ENCODE measurements at regions of chr17 and their contacts with region 1.

Region 1: DNA sequence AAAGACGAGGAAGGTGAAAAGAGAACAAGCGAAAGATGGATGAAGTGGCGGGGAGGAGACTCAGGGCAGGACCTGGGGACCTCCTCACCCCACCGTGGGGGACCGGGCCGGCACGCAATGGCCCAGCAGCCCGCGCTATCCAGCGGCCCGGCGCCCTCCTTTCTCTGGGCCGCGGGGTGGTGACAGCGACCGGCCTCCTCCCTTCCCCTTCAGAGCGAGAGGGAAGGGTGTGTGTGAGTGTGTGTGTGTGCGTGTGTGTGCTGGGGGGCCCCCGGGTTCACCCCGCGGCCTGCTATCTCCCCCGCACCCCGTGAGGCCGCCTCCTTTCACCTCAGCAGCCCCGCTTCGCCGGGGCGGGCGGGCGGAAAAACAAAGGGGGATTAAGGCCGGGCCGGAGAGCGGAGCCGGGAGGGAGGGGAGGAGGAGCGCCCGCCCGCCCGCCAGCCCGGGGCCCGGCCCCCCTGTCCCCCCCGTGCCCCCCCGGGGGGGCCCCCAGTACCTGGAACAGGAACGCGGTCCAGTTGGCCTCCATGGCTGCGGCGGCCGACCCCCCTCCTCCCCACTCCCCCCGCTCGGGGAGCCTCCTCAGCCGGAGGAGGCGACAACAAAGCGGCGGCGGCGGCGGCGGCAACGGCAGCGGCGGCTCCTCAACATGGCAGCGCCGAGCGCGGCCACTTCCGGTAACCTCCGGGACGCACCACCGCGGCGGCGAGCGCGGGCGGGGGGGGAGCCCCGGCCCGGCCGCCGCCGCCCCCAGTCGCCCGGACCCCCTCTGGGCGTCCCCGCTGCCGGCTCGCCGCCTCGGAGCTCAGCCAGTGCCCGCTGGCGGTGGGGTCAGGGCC is at the start of gene VEZF1:
- DNase-seq: peak in 1 of 2 experiments; percentile 83
- H3K4me3 ChIP-seq: peak within 1 kb of the TSS; percentile 73 to 95 (median 86)
- H3K27ac ChIP-seq: peak within 1 kb of the TSS; percentile 89
- H3K4me1 ChIP-seq: peaks cover 0 to 2% (median 0%) of the 10 kb centered on the region in 4 experiments; a peak in 3 of 7 replicates
- H3K27me3 ChIP-seq: no peaks in the 10 kb centered on the region
- CTCF ChIP-seq: no peak
- EP300 ChIP-seq: 0 out of 3 replicates have a peak, but pooled peaks of 1 of the 2 experiments have one; percentile 22
- POLR2A ChIP-seq: no peak; a peak in 1 of 3 replicates
- RAD21 ChIP-seq: no peak
- total RNA-seq, gene VEZF1: 56.7 and 61.9 TPM in 2 replicates

Region 2: GRCh38 chr17:57875309-57876115 is 112.3 kb before region 1 on chr17:
- CTCF ChIA-PET with region 1: interaction called, 134 read pairs
- POLR2A ChIA-PET with region 1: interaction called, 672 read pairs
- DNase-seq: peak; percentile 71 to 72
- H3K4me3 ChIP-seq: peak overlapping the region in 2 of 4 experiments; percentile 11 to 32; a peak in 5 of 8 replicates
- H3K27ac ChIP-seq: peak overlapping the region; percentile 32; the same call in 1 of the 2 replicates
- H3K4me1 ChIP-seq: peaks cover 21 to 50% (median 37%) of the 10 kb centered on the region in 4 experiments
- H3K27me3 ChIP-seq: peaks cover 0 to 14% (median 6%) of the 10 kb centered on the region in 4 experiments; a peak in 4 of 7 replicates
- CTCF ChIP-seq: 0 out of 4 replicates have a peak, but pooled peaks of 1 of the 3 experiments have one; percentile 6
- EP300 ChIP-seq: no peak
- POLR2A ChIP-seq: no peak
- RAD21 ChIP-seq: peak in 1 of 2 experiments; percentile 20; a peak in 2 of 4 replicates

Region 3: DNA sequence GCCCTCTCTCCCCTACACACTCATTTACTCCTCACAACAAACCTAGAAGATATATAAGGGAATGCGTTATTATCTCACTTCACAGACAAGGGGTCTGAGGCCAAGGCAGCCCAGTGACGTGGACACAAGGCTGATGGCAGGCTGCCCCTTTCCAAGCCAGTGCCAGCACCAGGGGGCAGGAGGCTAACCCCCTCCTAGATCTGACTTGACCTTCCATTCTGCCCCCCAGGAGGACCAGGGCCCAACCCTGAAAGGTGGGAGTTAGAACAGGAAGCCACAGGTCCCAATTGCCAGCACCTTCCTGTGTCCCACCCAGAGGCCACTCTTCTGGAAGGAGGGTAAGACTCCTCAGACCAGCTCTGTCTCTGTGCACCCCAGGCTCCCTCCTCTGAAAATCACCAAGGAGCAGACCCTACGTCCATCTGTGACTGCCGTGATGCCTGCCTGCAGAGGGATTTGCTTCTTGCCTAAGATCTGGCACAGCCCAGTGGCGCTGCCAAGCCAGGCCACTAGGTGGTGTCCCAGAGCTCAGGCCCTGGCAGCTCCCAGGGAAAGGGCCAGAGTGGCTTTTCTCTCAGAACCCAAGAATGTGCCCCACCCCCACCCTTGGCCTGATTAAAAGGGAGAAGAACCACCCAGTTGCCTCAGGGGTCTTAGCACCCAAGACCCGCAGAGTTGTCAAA is 95.5 kb before region 1 on chr17:
- CTCF ChIA-PET with region 1: interaction called, 15 read pairs
- POLR2A ChIA-PET with region 1: interaction called, 7 read pairs
- DNase-seq: peak in 1 of 2 experiments; percentile 99
- H3K4me3 ChIP-seq: peak overlapping the region in 1 of 4 experiments; percentile 1; a peak in 1 of 8 replicates
- H3K27ac ChIP-seq: peak overlapping the region; percentile 54; the same call in 1 of the 2 replicates
- H3K4me1 ChIP-seq: peaks cover 8 to 11% (median 11%) of the 10 kb centered on the region in 4 experiments
- H3K27me3 ChIP-seq: no peaks in the 10 kb centered on the region
- CTCF ChIP-seq: peak; percentile 96 to 100 (median 100)
- EP300 ChIP-seq: peak in 1 of 2 experiments; percentile 71; a peak in 1 of 3 replicates
- POLR2A ChIP-seq: no peak
- RAD21 ChIP-seq: peak; percentile 89 to 94

Region 4: GRCh38 chr17:57970706-57971105 is 17.1 kb before region 1 on chr17:
- CTCF ChIA-PET with region 1: interaction called, 9 read pairs
- POLR2A ChIA-PET with region 1: interaction called, 27 read pairs
- DNase-seq: no peak
- H3K4me3 ChIP-seq: no peak overlapping the region
- H3K27ac ChIP-seq: no peak overlapping the region
- H3K4me1 ChIP-seq: peaks cover 0 to 3% (median 0%) of the 10 kb centered on the region in 4 experiments; a peak in 3 of 7 replicates
- H3K27me3 ChIP-seq: no peaks in the 10 kb centered on the region
- CTCF ChIP-seq: no peak
- EP300 ChIP-seq: no peak
- POLR2A ChIP-seq: no peak
- RAD21 ChIP-seq: no peak

Region 5: GRCh38 chr17:58019039-58019438 is 31.2 kb after region 1 on chr17:
- CTCF ChIA-PET with region 1: no interaction called
- POLR2A ChIA-PET with region 1: no interaction called
- DNase-seq: no peak
- H3K4me3 ChIP-seq: no peak overlapping the region
- H3K27ac ChIP-seq: no peak overlapping the region
- H3K4me1 ChIP-seq: peaks cover 0 to 6% (median 2%) of the 10 kb centered on the region in 4 experiments; a peak in 2 of 7 replicates
- H3K27me3 ChIP-seq: no peaks in the 10 kb centered on the region
- CTCF ChIP-seq: no peak
- EP300 ChIP-seq: no peak
- POLR2A ChIP-seq: no peak
- RAD21 ChIP-seq: no peak

Measured in H1 (cell line).